ENCODE measurements at regions of chr11 and their contacts with region 1.

Region 1: GRCh38 chr11:95923728-95924413 is at the start of gene MTMR2:
- DNase-seq: peak; percentile 69
- ATAC-seq: peak; percentile 82
- H3K4me3 ChIP-seq: peak within 1 kb of the TSS; percentile 85
- H3K27ac ChIP-seq: peak within 1 kb of the TSS; percentile 81
- H3K4me1 ChIP-seq: peaks cover 26% of the 10 kb centered on the region
- H3K27me3 ChIP-seq: no peaks in the 10 kb centered on the region
- CTCF ChIP-seq: no peak
- total RNA-seq, gene MTMR2: 31.7 and 32.2 TPM in 2 replicates

Region 2: DNA sequence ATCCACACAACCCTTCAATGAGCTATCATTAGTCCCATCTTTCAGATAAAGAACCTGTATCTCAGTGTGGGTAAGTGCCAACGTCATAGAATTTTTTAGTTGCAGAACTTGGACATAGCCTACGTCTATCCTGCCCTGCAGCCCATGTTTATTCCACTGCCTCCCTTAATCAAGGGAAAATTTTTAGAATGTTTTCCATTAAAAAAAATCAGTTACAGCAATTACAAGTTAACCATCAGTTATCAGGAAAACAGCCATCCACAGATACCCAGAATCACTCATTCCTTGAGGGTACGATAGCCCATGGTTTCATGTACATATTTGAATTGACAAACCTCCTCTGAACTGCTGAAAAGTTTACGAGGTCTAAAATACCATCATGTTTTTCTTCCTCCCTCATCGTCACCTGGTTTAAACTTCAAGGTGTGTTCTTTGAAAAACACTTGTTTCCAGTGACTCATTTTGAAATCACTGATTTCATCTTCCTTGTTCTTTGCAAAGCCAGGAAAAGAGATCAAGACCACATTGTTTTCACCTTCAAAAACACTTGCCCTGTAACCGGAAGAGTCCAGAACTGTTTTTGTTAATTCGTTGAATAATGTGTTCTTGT is 235.2 kb before region 1 on chr11:
- CTCF ChIA-PET with region 1: no interaction called
- POLR2A ChIA-PET with region 1: no interaction called
- intact Hi-C with region 1: no loop called
- DNase-seq: no peak
- ATAC-seq: no peak
- H3K4me3 ChIP-seq: no peak overlapping the region
- H3K27ac ChIP-seq: no peak overlapping the region
- H3K4me1 ChIP-seq: no peaks in the 10 kb centered on the region
- H3K27me3 ChIP-seq: peaks cover 33% of the 10 kb centered on the region
- CTCF ChIP-seq: no peak

Region 3: GRCh38 chr11:95790123-95790932 is 133.5 kb before region 1 on chr11 and contains the start of gene CEP57:
- CTCF ChIA-PET with region 1: no interaction called
- POLR2A ChIA-PET with region 1: no interaction called
- intact Hi-C with region 1: loop called (anchors 2 kb)
- DNase-seq: peak; percentile 99
- ATAC-seq: peak; percentile 73
- H3K4me3 ChIP-seq: peak within 1 kb of the TSS; percentile 86
- H3K27ac ChIP-seq: peak within 1 kb of the TSS; percentile 87
- H3K4me1 ChIP-seq: peaks cover 42% of the 10 kb centered on the region
- H3K27me3 ChIP-seq: no peaks in the 10 kb centered on the region
- CTCF ChIP-seq: no peak
- total RNA-seq, gene CEP57: 36.7 and 38.1 TPM in 2 replicates

Region 4: DNA sequence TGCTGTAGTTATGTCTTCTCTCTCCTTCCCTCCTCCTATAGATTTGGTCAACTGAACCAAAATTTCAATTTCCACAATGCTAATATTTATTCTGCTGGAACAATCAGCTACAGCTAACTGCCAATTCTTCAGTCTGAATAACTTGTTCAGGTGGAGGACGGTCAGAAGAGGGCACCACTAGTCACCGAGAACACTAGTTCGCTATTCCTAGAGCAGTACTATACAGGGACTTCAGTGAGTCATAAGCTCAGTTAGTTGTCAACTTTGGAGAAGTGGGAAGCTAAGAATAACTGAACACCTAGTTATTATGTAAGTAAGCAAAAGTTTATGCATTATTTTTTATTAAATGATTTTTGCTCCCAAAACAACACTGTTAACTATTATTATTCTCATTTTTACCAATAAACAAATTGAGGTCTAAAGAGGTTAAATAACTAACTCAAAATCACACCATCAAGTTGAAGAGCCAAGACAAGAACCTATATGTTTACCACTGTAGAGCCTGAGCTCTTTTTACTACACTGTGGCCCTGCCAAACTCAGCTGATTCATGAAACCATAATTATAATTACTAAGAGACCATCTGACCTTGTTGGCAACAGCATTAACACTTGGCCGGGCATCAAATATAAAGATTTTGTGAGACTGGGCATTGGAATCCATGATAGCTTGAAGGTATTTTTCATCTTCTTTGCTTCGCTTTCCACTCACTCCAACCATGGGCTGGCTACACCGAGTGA is 74.6 kb before region 1 on chr11:
- CTCF ChIA-PET with region 1: interaction called, 7 read pairs
- POLR2A ChIA-PET with region 1: interaction called, 3 read pairs
- intact Hi-C with region 1: loop called (anchors 1 kb)
- DNase-seq: peak; percentile 88
- ATAC-seq: peak; percentile 86
- H3K4me3 ChIP-seq: peak overlapping the region; percentile 26; the same call in 1 of the 2 replicates
- H3K27ac ChIP-seq: peak overlapping the region; percentile 77
- H3K4me1 ChIP-seq: peaks cover 30% of the 10 kb centered on the region
- H3K27me3 ChIP-seq: no peaks in the 10 kb centered on the region
- CTCF ChIP-seq: peak; percentile 92

Region 5: GRCh38 chr11:95867105-95867504 is 56.8 kb before region 1 on chr11:
- CTCF ChIA-PET with region 1: no interaction called
- POLR2A ChIA-PET with region 1: no interaction called
- intact Hi-C with region 1: no loop called
- DNase-seq: no peak
- ATAC-seq: no peak
- H3K4me3 ChIP-seq: no peak overlapping the region
- H3K27ac ChIP-seq: no peak overlapping the region
- H3K4me1 ChIP-seq: no peaks in the 10 kb centered on the region
- H3K27me3 ChIP-seq: no peaks in the 10 kb centered on the region
- CTCF ChIP-seq: no peak

Region 6: DNA sequence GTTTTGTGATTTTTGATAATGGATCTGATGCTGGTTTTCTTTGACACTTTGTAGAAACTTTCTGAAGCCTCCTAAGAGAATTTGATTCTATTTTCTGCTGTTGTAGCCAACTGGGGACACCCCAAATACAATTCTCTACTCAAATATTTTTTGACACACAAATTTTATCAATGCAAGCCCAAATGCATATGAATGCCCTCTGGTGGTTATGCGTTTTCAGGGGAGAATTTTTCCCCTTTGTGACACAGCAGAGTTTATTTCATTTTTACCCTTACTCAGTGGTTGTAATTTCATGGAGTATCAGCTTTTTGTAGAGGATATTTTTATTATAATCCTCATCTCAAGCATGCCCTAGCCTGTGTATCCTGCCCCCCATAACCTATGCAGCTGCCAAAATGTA is 44.7 kb after region 1 on chr11:
- CTCF ChIA-PET with region 1: no interaction called
- POLR2A ChIA-PET with region 1: no interaction called
- intact Hi-C with region 1: loop called (anchors 2 kb)
- DNase-seq: peak; percentile 56
- ATAC-seq: no peak; the same call in 1 of the 2 replicates
- H3K4me3 ChIP-seq: no peak overlapping the region
- H3K27ac ChIP-seq: no peak overlapping the region
- H3K4me1 ChIP-seq: no peaks in the 10 kb centered on the region
- H3K27me3 ChIP-seq: no peaks in the 10 kb centered on the region
- CTCF ChIP-seq: peak; percentile 80

Region 7: GRCh38 chr11:95977534-95978174 is 53.8 kb after region 1 on chr11:
- CTCF ChIA-PET with region 1: no interaction called
- POLR2A ChIA-PET with region 1: no interaction called
- intact Hi-C with region 1: loop called (anchors 2 kb)
- DNase-seq: peak; percentile 98
- ATAC-seq: peak; percentile 97
- H3K4me3 ChIP-seq: peak overlapping the region; percentile 17; the same call in 1 of the 2 replicates
- H3K27ac ChIP-seq: peak overlapping the region; percentile 76
- H3K4me1 ChIP-seq: peaks cover 27% of the 10 kb centered on the region
- H3K27me3 ChIP-seq: no peaks in the 10 kb centered on the region
- CTCF ChIP-seq: no peak